OCI-LY7 (cell line): ENCODE measurements at regions of chr5 and their contacts with region 1.

Region 1: GRCh38 chr5:177176175-177176711 is 42.7 kb downstream of the NSD1 start:
- DNase-seq: peak; percentile 51
- H3K4me3 ChIP-seq: peak overlapping the region; percentile 35
- H3K27ac ChIP-seq: peak overlapping the region; percentile 71
- H3K4me1 ChIP-seq: peaks cover 68% of the 10 kb centered on the region
- CTCF ChIP-seq: no peak

Region 2: GRCh38 chr5:177124486-177124991 is 51.7 kb before region 1 on chr5:
- CTCF ChIA-PET with region 1: interaction called, 3 read pairs
- POLR2A ChIA-PET with region 1: interaction called, 4 read pairs
- intact Hi-C with region 1: loop called (anchors 5 kb)
- DNase-seq: peak; percentile 89
- H3K4me3 ChIP-seq: peak overlapping the region; percentile 56
- H3K27ac ChIP-seq: peak overlapping the region; percentile 90
- H3K4me1 ChIP-seq: peaks cover 50% of the 10 kb centered on the region
- CTCF ChIP-seq: no peak

Region 3: GRCh38 chr5:177133853-177134696 is 42.2 kb before region 1 on chr5:
- CTCF ChIA-PET with region 1: interaction called, 3 read pairs
- POLR2A ChIA-PET with region 1: interaction called, 11 read pairs
- intact Hi-C with region 1: loop called (anchors 2 kb)
- DNase-seq: peak; percentile 68
- H3K4me3 ChIP-seq: peak overlapping the region; percentile 86
- H3K27ac ChIP-seq: peak overlapping the region; percentile 55
- H3K4me1 ChIP-seq: peaks cover 46% of the 10 kb centered on the region
- CTCF ChIP-seq: no peak

Region 4: GRCh38 chr5:177204281-177204680 is 28.0 kb after region 1 on chr5:
- CTCF ChIA-PET with region 1: no interaction called
- POLR2A ChIA-PET with region 1: no interaction called
- intact Hi-C with region 1: no loop called
- DNase-seq: no peak
- H3K4me3 ChIP-seq: no peak overlapping the region
- H3K27ac ChIP-seq: no peak overlapping the region
- H3K4me1 ChIP-seq: peaks cover 5% of the 10 kb centered on the region
- CTCF ChIP-seq: no peak

Region 5: DNA sequence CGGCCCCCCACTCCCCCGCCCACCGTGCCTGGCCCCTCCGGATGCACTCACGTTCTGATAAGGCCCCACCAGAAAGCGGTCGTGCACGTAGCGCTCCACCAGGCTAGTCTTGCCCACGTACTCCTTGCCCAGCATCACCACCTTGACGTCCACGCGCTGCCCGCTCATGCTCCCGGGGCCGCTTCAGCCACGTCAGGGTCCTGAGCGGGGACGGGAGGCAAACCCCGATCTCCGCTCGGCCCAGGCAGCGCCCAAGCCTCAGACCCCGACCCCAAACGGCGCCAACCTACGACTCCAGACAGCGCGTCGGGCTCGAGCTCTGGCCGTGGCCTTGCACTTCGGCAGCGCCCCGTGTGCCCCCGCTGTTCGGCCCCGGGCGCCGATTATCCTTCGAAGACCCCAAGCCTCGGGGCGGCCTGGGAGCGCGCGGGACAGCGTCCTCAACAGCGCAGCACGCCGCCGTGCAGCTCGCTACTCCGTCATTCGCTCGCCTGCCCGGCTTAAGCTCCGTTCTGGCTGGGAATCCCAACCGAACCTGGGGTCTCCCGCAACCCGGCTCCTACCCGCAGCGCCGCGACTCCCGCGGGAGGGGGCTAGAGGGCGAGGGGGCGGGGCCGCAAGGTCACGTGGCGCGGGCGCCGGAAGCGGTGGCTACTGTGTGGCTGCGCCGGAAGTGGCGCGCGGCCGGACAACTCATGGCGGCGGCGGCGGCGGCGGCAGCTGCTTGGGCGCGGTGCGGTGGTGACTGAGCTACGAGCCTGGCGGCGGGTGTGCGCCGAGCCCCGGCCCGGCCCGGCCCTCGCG is 127.1 kb after region 1 on chr5 and contains the starts of genes PRELID1 and RAB24:
- CTCF ChIA-PET with region 1: no interaction called
- POLR2A ChIA-PET with region 1: no interaction called
- intact Hi-C with region 1: loop called (anchors 5 kb)
- DNase-seq: peak; percentile 92
- H3K4me3 ChIP-seq: peak within 1 kb of the TSS; percentile 100
- H3K27ac ChIP-seq: peak within 1 kb of the TSS; percentile 73
- H3K4me1 ChIP-seq: peaks cover 69% of the 10 kb centered on the region
- CTCF ChIP-seq: peak; percentile 60
- total RNA-seq, gene PRELID1: 217 and 249 TPM in 2 replicates
- total RNA-seq, gene RAB24: 25.8 and 43.1 TPM in 2 replicates

Region 6: DNA sequence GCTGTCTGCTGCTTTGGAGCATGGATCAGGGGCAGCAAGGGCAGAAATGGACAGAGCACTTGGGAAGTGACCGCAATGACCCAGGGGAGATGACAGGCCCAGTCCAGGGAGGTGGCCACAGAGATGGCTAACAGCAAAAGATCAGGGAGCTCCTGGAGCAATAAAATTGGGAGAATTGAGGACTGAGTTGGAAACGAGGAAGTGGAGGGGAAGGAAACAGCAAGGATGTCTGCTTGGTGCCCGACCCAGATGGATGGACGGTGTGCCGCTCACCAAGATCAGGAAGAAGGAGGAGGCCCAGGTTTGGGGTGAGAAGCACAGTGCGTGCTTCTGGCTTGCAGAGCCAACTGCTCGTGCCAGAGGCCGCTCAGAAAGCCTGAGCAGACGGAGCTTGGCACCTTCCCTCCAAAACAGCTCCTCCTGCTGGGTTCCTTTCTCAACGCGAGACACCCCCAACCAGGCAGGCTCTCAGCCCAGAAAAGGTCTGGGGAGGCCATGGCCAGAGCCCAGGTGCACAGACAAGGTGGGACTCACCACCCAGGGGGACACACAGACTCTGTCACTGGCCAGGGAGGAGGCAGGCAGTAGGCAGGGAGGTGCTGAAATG is 206.3 kb after region 1 on chr5:
- CTCF ChIA-PET with region 1: no interaction called
- POLR2A ChIA-PET with region 1: no interaction called
- intact Hi-C with region 1: no loop called
- DNase-seq: peak; percentile 54
- H3K4me3 ChIP-seq: no peak overlapping the region
- H3K27ac ChIP-seq: no peak overlapping the region
- H3K4me1 ChIP-seq: peaks cover 17% of the 10 kb centered on the region
- CTCF ChIP-seq: peak; percentile 66